Spleen (tissue), 13 donors: ENCODE measurements at regions of chr2 and their contacts with region 1.

Region 1: GRCh38 chr2:121530212-121530705 is 421 bp upstream of the RNU4ATAC start:
- DNase-seq: peak; percentile 96
- H3K4me3 ChIP-seq: peak overlapping the region; percentile 69 to 97 (median 88)
- H3K27ac ChIP-seq: peak overlapping the region; percentile 95 to 99 (median 97)
- H3K4me1 ChIP-seq: peaks cover 19 to 77% (median 51%) of the 10 kb centered on the region in 6 donors
- H3K27me3 ChIP-seq: no peaks in the 10 kb centered on the region
- CTCF ChIP-seq: no peak
- POLR2A ChIP-seq: no peak

Region 2: GRCh38 chr2:121649596-121650314 is 119.5 kb after region 1 on chr2:
- intact Hi-C with region 1: loop called (anchors 5 kb)
- DNase-seq: peak; percentile 99
- H3K4me3 ChIP-seq: peak overlapping the region; percentile 49 to 90 (median 78)
- H3K27ac ChIP-seq: peak overlapping the region; percentile 95 to 98 (median 98)
- H3K4me1 ChIP-seq: peaks cover 22 to 75% (median 57%) of the 10 kb centered on the region in 6 donors
- H3K27me3 ChIP-seq: no peaks in the 10 kb centered on the region
- CTCF ChIP-seq: peak in 1 of 11 experiments; percentile 30
- POLR2A ChIP-seq: peak in 1 of 3 donors; percentile 41